ENCODE measurements at regions of chr7 and their contacts with region 1.

Region 1: DNA sequence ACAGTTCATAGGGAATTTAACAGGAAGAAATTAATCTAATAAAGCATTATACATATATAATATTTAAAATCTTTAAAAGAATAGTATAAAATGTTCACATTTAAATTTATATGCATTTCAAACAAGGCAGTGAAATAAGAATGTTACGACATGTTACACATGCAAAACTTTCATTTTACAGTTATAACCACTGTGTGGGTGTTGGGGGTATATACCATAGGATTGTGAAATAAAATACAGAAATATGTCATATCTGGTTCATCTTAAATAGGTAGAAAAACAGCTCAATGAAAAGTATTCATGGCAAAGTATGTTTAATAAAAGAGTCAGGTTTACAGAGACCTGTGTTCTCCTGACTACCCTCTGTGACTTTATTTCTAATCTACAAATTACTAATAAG is 45.6 kb downstream of the CHCHD3 start:
- DNase-seq: no peak
- H3K4me3 Mint-ChIP-seq: no peak overlapping the region
- H3K27ac Mint-ChIP-seq: no peak overlapping the region
- H3K4me1 Mint-ChIP-seq: peaks cover 8% of the 10 kb centered on the region
- H3K27me3 Mint-ChIP-seq: no peaks in the 10 kb centered on the region

Region 2: GRCh38 chr7:132966754-132967469 is 69.4 kb before region 1 on chr7:
- CTCF ChIA-PET with region 1: no interaction called
- POLR2A ChIA-PET with region 1: no interaction called
- intact Hi-C with region 1: no loop called
- DNase-seq: no peak
- H3K4me3 Mint-ChIP-seq: no peak overlapping the region
- H3K27ac Mint-ChIP-seq: no peak overlapping the region
- H3K4me1 Mint-ChIP-seq: peaks cover 6% of the 10 kb centered on the region
- H3K27me3 Mint-ChIP-seq: no peaks in the 10 kb centered on the region

Region 3: GRCh38 chr7:133009426-133010252 is 26.6 kb before region 1 on chr7:
- CTCF ChIA-PET with region 1: interaction called, 3 read pairs
- POLR2A ChIA-PET with region 1: no interaction called
- intact Hi-C with region 1: loop called (anchors 1 kb)
- DNase-seq: no peak
- H3K4me3 Mint-ChIP-seq: no peak overlapping the region
- H3K27ac Mint-ChIP-seq: no peak overlapping the region
- H3K4me1 Mint-ChIP-seq: peaks cover 6% of the 10 kb centered on the region
- H3K27me3 Mint-ChIP-seq: no peaks in the 10 kb centered on the region

Measured in activated CD4-positive, alpha-beta memory T cell treated with anti-CD3 and anti-CD28 coated beads for 36 hours (primary cell).